Cardiac septum (tissue), 1 donor: ENCODE measurements at regions of chr4 and their contacts with region 1.

Region 1: DNA sequence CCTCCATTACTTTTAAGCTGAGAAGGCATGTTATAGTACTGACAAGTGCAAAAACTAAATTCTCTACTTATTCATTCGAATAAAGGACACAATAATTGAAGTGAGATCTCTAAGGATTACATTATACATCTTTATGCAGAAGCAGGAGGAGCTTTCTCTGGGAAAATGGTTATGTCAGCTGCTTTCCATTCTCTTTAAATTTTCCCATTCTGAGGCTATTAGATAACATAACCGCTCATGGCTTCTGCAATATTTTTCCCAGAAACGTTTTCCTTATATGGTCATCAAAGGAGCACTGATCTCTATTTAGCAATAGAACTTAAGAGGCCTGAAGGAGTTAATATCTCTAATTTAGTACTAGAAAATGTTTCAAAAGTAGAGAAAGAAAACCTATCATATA is 221.6 kb downstream of the NSUN7 start:
- DNase-seq: no peak

Region 2: DNA sequence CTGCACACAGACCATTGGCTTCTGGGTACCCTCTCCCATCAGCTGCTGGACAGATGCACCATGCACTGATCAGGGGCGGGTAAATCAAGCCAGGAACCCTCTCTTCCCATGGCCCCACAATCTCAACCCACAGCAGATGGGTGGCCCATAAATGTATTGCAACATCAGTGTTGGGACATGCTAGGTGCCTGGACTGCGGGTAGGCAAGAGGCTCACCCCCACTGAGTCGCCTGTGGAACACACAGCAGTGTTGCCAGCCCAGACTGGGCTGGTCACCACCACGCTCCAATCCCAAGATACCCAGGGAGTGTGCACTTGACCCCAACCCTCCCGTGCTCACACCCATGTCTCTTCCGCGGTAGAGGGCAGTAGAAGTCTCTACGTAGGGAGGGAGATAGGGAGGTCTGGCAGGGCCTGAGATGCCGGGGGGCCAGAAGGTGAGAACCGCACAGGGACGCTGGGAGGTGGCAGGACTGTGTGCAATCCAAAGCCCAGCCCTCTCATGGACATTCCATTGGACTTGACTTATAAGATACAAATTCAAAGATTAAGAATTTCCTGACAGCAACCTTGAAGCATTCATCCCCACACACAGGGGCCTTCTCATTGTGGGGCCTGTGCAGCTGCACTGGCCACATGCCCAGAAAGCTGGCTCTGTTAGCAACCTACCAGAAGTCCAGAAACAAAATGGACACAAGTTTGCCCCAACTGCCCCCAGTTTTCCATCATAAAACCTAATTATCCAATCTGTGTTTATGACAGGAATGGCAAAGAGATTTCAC is 37.9 kb before region 1 on chr4:
- intact Hi-C with region 1: loop called (anchors 5 kb)
- DNase-seq: no peak